ENCODE measurements at regions of chr9 and their contacts with region 1.

Region 1: DNA sequence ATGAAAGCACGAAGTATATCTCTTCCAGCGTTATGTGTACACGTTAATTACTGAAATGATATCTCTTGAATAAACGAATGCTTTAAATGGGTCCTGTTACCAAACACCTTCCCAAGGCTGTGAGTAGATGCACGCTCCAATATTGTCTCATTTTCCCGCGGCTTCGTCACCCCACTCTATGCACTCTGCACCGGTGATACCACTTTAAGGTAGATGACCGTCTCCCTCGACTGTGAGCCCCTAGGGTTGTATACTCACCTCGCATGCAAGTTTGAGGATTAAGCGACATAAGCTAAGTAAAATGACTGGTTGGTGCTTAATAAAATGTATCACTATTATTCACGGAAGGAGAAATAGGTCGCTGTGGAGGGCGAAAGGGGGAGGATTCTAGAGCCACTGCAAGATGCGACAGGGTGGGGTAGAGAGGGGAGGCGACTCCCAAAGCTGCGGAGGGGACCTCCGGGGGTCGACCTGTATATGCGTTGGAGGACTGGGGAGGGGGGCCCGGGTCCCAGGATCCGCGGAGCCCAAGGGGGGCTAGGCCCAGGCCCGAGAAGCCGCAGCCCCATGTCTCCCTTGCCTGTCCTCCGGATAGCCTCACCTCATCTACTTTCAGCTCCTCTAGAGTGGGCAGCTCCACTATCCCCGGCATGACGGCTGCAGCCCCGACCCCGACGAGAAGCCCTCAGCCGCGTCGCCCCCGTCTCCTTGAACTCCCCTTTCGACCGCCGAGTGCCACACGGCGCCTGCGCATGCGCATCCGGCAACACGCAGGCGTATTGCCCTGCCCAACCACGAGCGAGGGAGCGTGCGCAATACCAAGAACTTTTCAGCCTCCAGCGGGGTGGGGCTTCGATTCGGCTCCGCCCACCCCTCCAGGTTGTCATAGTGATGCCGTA is at the starts of genes MORN5 and NDUFA8:
- DNase-seq: peak; percentile 98
- ATAC-seq: peak; percentile 98
- H3K4me3 ChIP-seq: peak within 1 kb of the TSS; percentile 33 to 99
- H3K27ac ChIP-seq: no peak within 1 kb of the TSS
- H3K4me1 ChIP-seq: peaks cover 0 to 2% of the 10 kb centered on the region in 2 donors
- H3K27me3 ChIP-seq: no peaks in the 10 kb centered on the region
- total RNA-seq, gene MORN5: not detected
- total RNA-seq, gene NDUFA8: 25.3 to 26.9 TPM

Region 2: DNA sequence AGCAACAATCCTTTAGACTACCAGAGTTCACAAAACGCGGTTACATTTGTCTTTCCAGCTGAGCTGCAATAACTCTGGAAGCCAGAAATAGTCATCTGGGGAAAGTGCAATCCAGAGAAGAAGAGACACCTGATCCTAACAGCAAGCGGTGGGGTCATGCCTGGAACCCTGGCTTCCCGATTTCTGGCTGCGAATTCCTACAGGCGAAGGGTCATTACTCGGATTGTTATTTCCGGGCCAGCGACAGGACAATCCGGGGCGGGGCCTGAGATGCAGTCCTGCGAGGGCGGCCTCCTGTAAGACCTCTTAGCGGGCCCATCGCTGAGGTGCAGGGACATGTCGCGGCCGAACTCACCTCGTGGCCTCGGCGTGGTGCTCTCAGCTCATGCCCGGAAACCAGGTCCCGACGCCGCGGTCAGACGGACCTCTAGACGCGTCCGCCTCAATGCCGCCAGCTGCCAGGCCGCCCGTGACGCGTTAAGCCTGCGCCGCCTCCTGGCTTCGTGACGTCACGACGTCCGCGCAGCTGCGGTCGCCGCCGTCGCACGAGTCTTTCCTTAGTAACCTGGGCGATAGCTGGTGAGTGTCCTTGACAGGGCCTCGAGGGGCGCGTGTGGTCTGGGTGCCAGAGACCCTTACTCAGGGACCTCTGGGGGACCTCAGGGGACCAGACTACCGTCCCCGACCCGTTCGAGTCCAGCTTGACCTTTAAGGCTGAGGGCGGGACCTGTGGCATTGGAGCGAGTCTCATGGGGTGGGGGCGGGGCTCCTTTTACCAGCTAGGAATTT is 105.3 kb after region 1 on chr9 and contains the starts of genes MRRF and RBM18:
- intact Hi-C with region 1: loop called in 1 of 2 experiments (anchors 5 kb)
- DNase-seq: peak; percentile 94 to 97
- ATAC-seq: peak; percentile 96
- H3K4me3 ChIP-seq: peak within 1 kb of the TSS; percentile 60 to 90
- H3K27ac ChIP-seq: peak within 1 kb of the TSS; percentile 80 to 92
- H3K4me1 ChIP-seq: peaks cover 5 to 6% of the 10 kb centered on the region in 2 donors
- H3K27me3 ChIP-seq: no peaks in the 10 kb centered on the region
- total RNA-seq, gene MRRF: 20.5 to 28.7 TPM
- total RNA-seq, gene RBM18: 15.0 to 16.6 TPM

Region 3: DNA sequence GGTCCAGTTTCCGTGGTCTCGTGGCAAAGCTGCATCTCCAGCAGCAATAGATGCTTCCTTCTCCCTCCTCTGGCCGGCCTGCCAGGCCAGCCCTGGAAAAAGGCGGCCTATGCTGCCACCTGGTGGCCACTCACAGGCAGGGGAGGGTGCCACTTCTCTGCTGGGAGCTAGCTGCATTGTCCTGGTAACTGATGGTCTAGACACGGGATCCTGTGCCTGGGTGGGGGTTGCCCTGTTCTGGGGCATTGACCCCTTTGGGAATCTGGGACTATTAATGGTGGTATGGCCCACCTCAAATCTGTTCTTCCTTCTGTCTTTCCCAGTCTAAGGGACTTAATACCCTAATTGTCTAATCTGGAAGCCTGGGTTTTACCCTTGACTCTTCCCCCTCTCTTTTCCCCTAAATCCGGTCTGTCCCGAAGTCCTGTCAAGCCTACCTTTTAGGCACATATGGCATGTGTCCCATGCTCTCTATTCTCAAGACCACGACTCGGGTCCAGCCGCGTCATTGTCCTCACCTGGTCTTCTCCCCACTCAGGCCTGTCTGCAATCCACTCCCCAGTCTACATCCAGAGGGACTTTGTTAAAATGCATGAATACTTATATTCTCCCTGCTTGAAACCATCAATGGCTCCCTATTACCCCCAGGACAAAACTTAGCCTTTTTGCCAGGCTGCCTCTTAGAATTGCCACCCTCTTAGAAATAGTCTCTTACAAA is 191.5 kb after region 1 on chr9:
- intact Hi-C with region 1: no loop called
- DNase-seq: peak; percentile 87 to 94
- ATAC-seq: peak; percentile 86
- H3K4me3 ChIP-seq: no peak overlapping the region
- H3K27ac ChIP-seq: no peak overlapping the region
- H3K4me1 ChIP-seq: no peaks in the 10 kb centered on the region
- H3K27me3 ChIP-seq: no peaks in the 10 kb centered on the region

Measured in aorta (tissue), 5 donors.